Activated naive CD4-positive, alpha-beta T cell treated with anti-CD3 and anti-CD28 coated beads for 36 hours (primary cell): ENCODE measurements at regions of chr11 and their contacts with region 1.

Region 1: GRCh38 chr11:72141066-72141465 is 5.5 kb downstream of the FOLR3 start:
- DNase-seq: no peak
- H3K4me3 Mint-ChIP-seq: no peak overlapping the region
- H3K27ac Mint-ChIP-seq: no peak overlapping the region
- H3K4me1 Mint-ChIP-seq: peaks cover 1% of the 10 kb centered on the region
- H3K27me3 Mint-ChIP-seq: no peaks in the 10 kb centered on the region

Region 2: GRCh38 chr11:71977743-71978418 is 163.2 kb before region 1 on chr11:
- CTCF ChIA-PET with region 1: interaction called, 21 read pairs
- intact Hi-C with region 1: loop called (anchors 2 kb)
- DNase-seq: peak; percentile 72
- H3K4me3 Mint-ChIP-seq: no peak overlapping the region
- H3K27ac Mint-ChIP-seq: no peak overlapping the region
- H3K4me1 Mint-ChIP-seq: no peaks in the 10 kb centered on the region
- H3K27me3 Mint-ChIP-seq: no peaks in the 10 kb centered on the region

Region 3: GRCh38 chr11:72030472-72031045 is 110.5 kb before region 1 on chr11:
- CTCF ChIA-PET with region 1: interaction called, 33 read pairs
- intact Hi-C with region 1: loop called (anchors 1 kb)
- DNase-seq: no peak
- H3K4me3 Mint-ChIP-seq: no peak overlapping the region
- H3K27ac Mint-ChIP-seq: peak overlapping the region; percentile 13
- H3K4me1 Mint-ChIP-seq: peaks cover 42% of the 10 kb centered on the region
- H3K27me3 Mint-ChIP-seq: no peaks in the 10 kb centered on the region

Region 4: GRCh38 chr11:72112321-72113219 is 28.5 kb before region 1 on chr11 and contains the start of gene ANAPC15:
- CTCF ChIA-PET with region 1: interaction called, 3 read pairs
- intact Hi-C with region 1: loop called (anchors 2 kb)
- DNase-seq: peak; percentile 100
- H3K4me3 Mint-ChIP-seq: peak within 1 kb of the TSS; percentile 85
- H3K27ac Mint-ChIP-seq: peak within 1 kb of the TSS; percentile 97
- H3K4me1 Mint-ChIP-seq: peaks cover 12% of the 10 kb centered on the region
- H3K27me3 Mint-ChIP-seq: no peaks in the 10 kb centered on the region
- total RNA-seq, gene ANAPC15: 69.1 to 70.3 TPM

Region 5: DNA sequence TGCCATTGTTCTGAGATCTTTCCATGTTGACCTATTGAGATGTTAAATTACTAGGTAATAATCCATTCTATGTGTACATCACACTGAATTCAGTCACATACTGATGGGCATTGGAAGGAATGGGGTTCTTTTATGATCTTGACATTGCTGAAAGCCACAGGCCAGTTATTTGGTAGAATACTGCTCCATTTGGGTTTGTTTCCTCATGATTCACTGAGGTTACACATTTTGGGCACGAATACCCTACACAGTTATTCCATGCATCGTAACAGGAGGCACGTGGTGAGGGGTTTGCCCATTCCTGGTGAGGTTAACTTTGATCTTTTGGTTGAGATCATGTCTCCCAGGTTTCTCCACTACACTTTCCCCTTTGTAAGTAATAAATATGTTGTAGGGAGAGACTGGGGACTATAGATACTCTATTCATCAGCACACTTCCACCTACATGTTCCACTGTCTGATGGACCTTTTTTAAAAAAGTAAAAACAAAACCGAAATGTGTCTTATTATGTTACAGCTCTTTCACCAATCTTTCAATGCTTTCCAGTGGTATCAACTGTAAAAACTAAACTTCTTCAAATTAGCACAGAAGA is 38.8 kb after region 1 on chr11:
- CTCF ChIA-PET with region 1: interaction called, 10 read pairs
- intact Hi-C with region 1: loop called (anchors 1 kb)
- DNase-seq: no peak
- H3K4me3 Mint-ChIP-seq: no peak overlapping the region
- H3K27ac Mint-ChIP-seq: no peak overlapping the region
- H3K4me1 Mint-ChIP-seq: peaks cover 7% of the 10 kb centered on the region
- H3K27me3 Mint-ChIP-seq: no peaks in the 10 kb centered on the region